ENCODE measurements at regions of chr2 and their contacts with region 1.

Region 1: GRCh38 chr2:197705121-197705911 is at the start of gene MARS2:
- DNase-seq: peak; percentile 92
- H3K4me3 Mint-ChIP-seq: peak within 1 kb of the TSS; percentile 72
- H3K27ac Mint-ChIP-seq: peak within 1 kb of the TSS; percentile 80
- H3K4me1 Mint-ChIP-seq: peaks cover 37% of the 10 kb centered on the region
- H3K27me3 Mint-ChIP-seq: no peaks in the 10 kb centered on the region
- total RNA-seq, gene MARS2: 7.5 to 8.8 TPM

Region 2: DNA sequence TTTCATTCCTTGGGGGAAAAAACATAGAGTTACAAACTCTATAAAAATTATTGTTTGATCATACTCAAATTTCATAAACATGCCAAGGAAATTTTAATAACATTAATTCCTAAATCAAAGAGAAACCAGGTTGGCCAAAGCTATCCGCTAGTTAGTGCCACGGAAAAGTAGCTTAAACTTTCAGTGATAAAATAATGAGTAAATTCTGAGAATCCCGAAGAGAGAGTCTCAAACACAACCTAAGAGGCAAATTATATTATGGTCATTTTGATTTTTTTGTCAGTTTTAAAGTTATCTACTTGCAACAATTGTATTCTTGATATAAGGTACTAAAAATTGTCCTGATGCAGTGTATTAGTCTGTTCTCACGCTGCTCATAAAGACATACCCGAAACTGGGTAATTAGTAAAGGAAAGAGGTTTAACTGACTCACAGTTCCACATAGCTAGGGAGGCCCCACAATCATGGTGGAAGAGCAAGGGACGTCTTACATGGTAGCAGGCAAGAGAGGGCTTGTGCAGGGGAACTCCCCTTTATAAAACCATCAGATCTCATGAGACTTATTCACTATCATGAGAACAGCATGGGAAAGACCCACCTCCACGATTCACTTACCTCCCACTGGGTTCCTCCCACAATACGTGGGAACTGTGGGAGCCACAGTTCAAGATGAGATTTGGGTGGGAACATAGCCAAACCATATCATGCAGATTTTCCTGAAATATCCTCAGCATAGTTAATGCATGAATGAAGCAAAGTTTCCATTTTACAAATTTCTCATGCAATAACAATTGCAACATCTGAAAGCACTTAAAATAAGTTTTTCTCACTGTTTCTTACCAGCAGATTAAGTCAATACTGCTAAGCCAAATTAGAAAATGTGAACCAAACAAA is 1328.1 kb before region 1 on chr2:
- CTCF ChIA-PET with region 1: no interaction called
- intact Hi-C with region 1: loop called (anchors 1 kb)
- DNase-seq: peak; percentile 62
- H3K4me3 Mint-ChIP-seq: no peak overlapping the region
- H3K27ac Mint-ChIP-seq: peak overlapping the region; percentile 50
- H3K4me1 Mint-ChIP-seq: peaks cover 12% of the 10 kb centered on the region
- H3K27me3 Mint-ChIP-seq: no peaks in the 10 kb centered on the region

Region 3: GRCh38 chr2:197434541-197435513 is 270.5 kb before region 1 on chr2 and contains the start of gene SF3B1:
- CTCF ChIA-PET with region 1: no interaction called
- intact Hi-C with region 1: loop called (anchors 1 kb)
- DNase-seq: peak; percentile 100
- H3K4me3 Mint-ChIP-seq: peak within 1 kb of the TSS; percentile 99
- H3K27ac Mint-ChIP-seq: peak within 1 kb of the TSS; percentile 100
- H3K4me1 Mint-ChIP-seq: peaks cover 46% of the 10 kb centered on the region
- H3K27me3 Mint-ChIP-seq: no peaks in the 10 kb centered on the region
- total RNA-seq, gene SF3B1: 235 to 248 TPM

Region 4: DNA sequence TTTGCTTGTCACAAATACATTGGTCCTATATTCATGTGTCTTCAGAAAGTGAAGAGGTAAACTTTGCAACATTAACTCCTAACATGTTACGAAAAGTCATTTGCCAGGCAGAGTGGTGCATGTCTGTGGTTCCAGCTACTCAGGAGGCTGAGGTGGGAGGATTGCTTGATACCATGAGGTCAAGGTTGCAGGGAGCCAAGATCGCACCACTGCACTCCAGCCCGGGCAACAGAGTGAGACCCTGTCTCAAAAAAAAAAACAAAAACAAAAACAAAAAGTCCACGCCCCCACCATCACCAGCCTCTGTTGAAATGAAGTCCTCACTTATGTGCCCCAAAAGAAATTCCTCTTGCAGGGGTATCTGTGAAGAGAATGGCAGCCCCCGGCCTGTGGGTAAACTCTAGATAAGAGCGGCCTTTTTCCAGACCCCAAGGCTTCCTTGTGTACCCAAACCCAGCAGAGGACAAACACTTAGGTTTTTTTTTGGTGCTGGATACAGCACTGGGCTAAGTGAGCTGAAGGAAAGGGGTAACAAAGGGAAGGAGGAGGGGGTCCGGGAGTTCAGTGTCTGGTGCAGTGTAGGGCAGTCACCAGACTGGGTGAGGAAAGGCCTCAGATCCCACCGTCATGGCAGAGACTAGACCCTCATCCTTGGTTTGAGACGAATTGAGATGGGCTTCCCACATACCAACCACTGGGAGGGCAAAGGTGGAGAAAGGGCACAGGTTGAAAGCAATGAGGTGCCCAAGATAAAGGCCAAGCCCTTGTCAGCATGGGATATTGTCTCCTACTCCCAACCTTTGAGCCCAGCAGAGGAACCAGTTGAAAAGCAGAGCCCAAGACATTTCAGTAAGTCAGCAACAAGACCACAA is 224.9 kb before region 1 on chr2:
- CTCF ChIA-PET with region 1: no interaction called
- intact Hi-C with region 1: no loop called
- DNase-seq: no peak
- H3K4me3 Mint-ChIP-seq: no peak overlapping the region
- H3K27ac Mint-ChIP-seq: no peak overlapping the region
- H3K4me1 Mint-ChIP-seq: peaks cover under 1% of the 10 kb centered on the region
- H3K27me3 Mint-ChIP-seq: no peaks in the 10 kb centered on the region

Region 5: GRCh38 chr2:197515739-197516392 is 189.4 kb before region 1 on chr2 and contains the start of gene MOB4:
- CTCF ChIA-PET with region 1: no interaction called
- intact Hi-C with region 1: loop called (anchors 1 kb)
- DNase-seq: peak; percentile 93
- H3K4me3 Mint-ChIP-seq: peak within 1 kb of the TSS; percentile 98
- H3K27ac Mint-ChIP-seq: peak within 1 kb of the TSS; percentile 89
- H3K4me1 Mint-ChIP-seq: peaks cover 37% of the 10 kb centered on the region
- H3K27me3 Mint-ChIP-seq: no peaks in the 10 kb centered on the region
- total RNA-seq, gene MOB4: 10.7 to 14.1 TPM

Region 6: DNA sequence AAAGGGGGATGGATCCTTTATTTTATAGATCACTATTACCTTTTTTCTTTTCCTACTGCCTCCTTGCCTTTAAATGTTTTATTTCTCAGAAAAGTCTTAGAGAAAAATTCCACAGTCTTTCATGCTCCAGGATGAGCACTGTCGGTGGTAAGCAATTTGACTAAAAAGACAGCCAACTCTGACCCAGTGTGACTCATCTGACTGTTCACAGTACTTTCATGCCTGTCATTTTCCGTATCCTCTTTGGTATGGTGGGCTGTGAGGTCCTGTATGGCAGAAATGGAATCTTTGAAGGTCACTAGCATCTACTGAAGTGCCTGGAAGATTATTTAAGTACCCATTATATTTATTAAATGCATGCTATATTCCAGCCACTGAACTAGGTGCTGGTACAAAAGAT is 27.8 kb before region 1 on chr2:
- CTCF ChIA-PET with region 1: no interaction called
- intact Hi-C with region 1: no loop called
- DNase-seq: no peak
- H3K4me3 Mint-ChIP-seq: no peak overlapping the region
- H3K27ac Mint-ChIP-seq: no peak overlapping the region
- H3K4me1 Mint-ChIP-seq: no peaks in the 10 kb centered on the region
- H3K27me3 Mint-ChIP-seq: peaks cover 2% of the 10 kb centered on the region

Region 7: GRCh38 chr2:197804049-197804757 is 98.9 kb after region 1 on chr2 and contains the start of gene PLCL1:
- CTCF ChIA-PET with region 1: no interaction called
- intact Hi-C with region 1: loop called (anchors 1 kb)
- DNase-seq: peak; percentile 96
- H3K4me3 Mint-ChIP-seq: peak within 1 kb of the TSS; percentile 94
- H3K27ac Mint-ChIP-seq: peak within 1 kb of the TSS; percentile 75
- H3K4me1 Mint-ChIP-seq: peaks cover 43% of the 10 kb centered on the region
- H3K27me3 Mint-ChIP-seq: no peaks in the 10 kb centered on the region
- total RNA-seq, gene PLCL1: 3.3 to 3.5 TPM

Region 8: DNA sequence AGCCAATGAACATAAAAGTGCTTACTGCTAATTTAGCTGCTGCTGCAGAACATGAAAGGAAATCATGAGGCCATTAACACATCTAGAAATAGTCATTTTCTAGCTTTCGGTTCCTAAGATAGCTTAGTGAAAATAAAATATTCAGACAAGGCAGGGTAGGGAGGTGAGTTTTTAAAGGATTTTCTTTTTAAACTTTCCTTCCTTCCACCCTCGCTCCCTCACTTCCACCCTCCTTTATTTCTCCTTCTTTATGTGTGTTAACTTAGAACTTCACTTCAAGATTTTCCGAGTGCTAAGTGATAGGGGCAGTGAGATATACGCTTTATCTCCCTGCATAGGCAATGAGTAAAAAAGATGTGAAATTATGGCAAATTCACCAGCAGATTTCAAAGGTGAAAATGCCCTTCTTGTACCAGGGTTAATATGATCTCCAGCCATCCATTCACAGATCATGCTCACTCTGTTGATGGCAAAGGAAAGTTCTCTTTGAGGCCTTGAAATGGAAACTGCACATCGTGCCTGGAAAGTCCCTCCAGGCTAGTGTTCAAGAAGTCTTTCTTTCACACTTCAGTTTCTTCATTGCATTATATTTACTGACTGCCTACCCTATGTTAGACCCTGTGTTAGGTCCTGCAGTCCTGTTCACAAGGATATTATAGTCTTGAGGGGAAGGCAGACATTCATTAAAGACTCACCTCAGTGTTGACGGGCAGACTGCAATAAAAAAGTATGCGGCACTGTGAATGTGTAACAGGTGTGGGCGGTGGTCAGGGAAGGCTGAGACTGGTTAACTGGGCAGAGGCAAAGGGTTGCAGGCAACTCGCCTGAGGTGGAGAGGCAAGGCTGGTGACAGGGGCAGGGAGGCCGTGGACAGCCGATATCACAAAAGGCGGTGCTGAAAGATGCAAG is 299.9 kb after region 1 on chr2:
- CTCF ChIA-PET with region 1: no interaction called
- intact Hi-C with region 1: loop called (anchors 5 kb)
- DNase-seq: peak; percentile 74
- H3K4me3 Mint-ChIP-seq: peak overlapping the region; percentile 60
- H3K27ac Mint-ChIP-seq: peak overlapping the region; percentile 89
- H3K4me1 Mint-ChIP-seq: peaks cover 66% of the 10 kb centered on the region
- H3K27me3 Mint-ChIP-seq: no peaks in the 10 kb centered on the region

Region 9: GRCh38 chr2:199459286-199460016 is 1754.1 kb after region 1 on chr2:
- CTCF ChIA-PET with region 1: no interaction called
- intact Hi-C with region 1: loop called (anchors 5 kb)
- DNase-seq: peak; percentile 73
- H3K4me3 Mint-ChIP-seq: peak overlapping the region; percentile 90
- H3K27ac Mint-ChIP-seq: peak overlapping the region; percentile 47
- H3K4me1 Mint-ChIP-seq: peaks cover 29% of the 10 kb centered on the region
- H3K27me3 Mint-ChIP-seq: peaks cover 56% of the 10 kb centered on the region